Caco-2 (cell line): ENCODE measurements at regions of chr10 and their contacts with region 1.

Region 1: GRCh38 chr10:23994479-23995046 is 214.4 kb upstream of the KIAA1217 start:
- DNase-seq: peak; percentile 73 to 85
- H3K4me3 ChIP-seq: no peak overlapping the region
- H3K4me3 Mint-ChIP-seq: no peak overlapping the region
- H3K27ac Mint-ChIP-seq: no peak overlapping the region
- H3K4me1 ChIP-seq: no peaks in the 10 kb centered on the region
- H3K4me1 Mint-ChIP-seq: peaks cover 6% of the 10 kb centered on the region
- H3K27me3 ChIP-seq: no peaks in the 10 kb centered on the region
- H3K27me3 Mint-ChIP-seq: no peaks in the 10 kb centered on the region
- CTCF ChIP-seq: peak; percentile 97 to 98

Region 2: DNA sequence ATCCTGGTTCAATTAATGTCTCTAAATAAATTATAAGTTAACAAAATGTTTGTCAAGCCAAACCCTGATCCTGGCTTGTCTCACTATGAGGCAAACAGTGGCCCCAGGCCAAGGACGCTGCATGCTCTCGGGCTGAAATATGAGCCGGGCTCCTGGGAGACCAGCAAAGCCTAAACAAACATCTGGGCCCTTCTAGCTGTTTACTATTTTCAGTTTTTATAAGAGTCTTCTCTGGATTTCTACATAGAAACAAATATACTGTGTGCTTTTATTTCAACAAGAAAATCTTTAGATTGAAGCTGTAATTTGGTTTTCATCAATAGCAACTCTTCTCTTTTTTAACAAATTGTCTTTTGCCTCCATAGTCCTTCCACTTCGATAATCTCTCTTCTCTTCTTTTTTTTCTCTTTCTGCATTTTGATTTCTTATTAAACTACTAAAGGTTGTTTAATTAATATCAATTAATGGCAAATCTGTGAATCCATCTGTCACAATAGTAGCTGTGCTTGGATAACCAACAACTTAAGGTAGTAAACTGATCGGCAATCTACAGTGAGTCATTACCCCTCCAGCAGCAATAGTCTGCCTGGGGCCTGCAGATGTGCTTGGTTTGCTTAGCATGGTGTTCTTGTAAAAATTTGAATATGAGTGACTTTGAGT is 1907.7 kb before region 1 on chr10:
- CTCF ChIA-PET with region 1: no interaction called
- POLR2A ChIA-PET with region 1: interaction called, 10 read pairs
- intact Hi-C with region 1: no loop called
- DNase-seq: peak in 1 of 2 experiments; percentile 18
- H3K4me3 ChIP-seq: no peak overlapping the region
- H3K4me3 Mint-ChIP-seq: no peak overlapping the region
- H3K27ac Mint-ChIP-seq: peak overlapping the region; percentile 36
- H3K4me1 ChIP-seq: no peaks in the 10 kb centered on the region
- H3K4me1 Mint-ChIP-seq: peaks cover 5% of the 10 kb centered on the region
- H3K27me3 ChIP-seq: no peaks in the 10 kb centered on the region
- H3K27me3 Mint-ChIP-seq: peaks cover 15% of the 10 kb centered on the region
- CTCF ChIP-seq: no peak

Region 3: DNA sequence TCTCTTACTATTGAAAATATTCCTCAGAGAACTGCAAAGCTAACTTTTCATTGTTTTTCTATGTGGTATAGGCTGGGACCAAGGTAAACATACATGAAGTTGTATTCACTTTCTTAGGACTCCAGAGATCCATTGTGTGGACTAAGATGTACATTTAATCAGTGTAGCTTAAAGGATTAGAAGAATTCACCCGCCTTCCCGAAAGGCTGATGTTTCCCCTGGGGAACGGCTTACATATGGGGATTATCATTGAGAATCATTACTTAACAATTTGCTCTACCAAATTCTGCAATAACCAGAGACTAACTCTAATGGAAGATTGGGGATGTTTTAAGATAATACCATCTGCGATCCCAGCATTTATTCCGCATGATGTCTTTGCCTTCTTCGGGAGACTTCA is 42.7 kb before region 1 on chr10:
- CTCF ChIA-PET with region 1: no interaction called
- POLR2A ChIA-PET with region 1: no interaction called
- intact Hi-C with region 1: no loop called
- DNase-seq: no peak
- H3K4me3 ChIP-seq: no peak overlapping the region
- H3K4me3 Mint-ChIP-seq: no peak overlapping the region
- H3K27ac Mint-ChIP-seq: no peak overlapping the region
- H3K4me1 ChIP-seq: no peaks in the 10 kb centered on the region
- H3K4me1 Mint-ChIP-seq: peaks cover 7% of the 10 kb centered on the region
- H3K27me3 ChIP-seq: no peaks in the 10 kb centered on the region
- H3K27me3 Mint-ChIP-seq: peaks cover 5% of the 10 kb centered on the region
- CTCF ChIP-seq: no peak

Region 4: DNA sequence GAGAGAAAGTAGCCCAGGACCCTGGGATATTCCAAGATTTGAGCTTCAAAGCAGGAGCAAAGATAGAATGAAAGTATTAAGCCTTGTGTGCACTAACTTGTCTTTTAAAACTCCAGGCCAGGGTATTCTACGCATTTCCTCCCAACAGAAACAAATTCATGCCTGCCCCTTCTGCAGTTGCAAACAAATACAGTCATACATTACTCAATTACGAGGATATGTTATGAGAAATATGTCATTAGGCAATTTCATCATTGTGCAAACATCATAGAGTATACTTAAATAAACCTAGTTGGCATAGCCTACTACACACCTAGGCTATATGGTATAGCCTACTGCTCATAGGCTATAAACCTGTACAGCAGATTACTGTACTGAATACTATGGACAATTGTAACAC is 59.9 kb after region 1 on chr10:
- CTCF ChIA-PET with region 1: no interaction called
- POLR2A ChIA-PET with region 1: no interaction called
- intact Hi-C with region 1: no loop called
- DNase-seq: no peak
- H3K4me3 ChIP-seq: no peak overlapping the region
- H3K4me3 Mint-ChIP-seq: no peak overlapping the region
- H3K27ac Mint-ChIP-seq: no peak overlapping the region
- H3K4me1 ChIP-seq: no peaks in the 10 kb centered on the region
- H3K4me1 Mint-ChIP-seq: no peaks in the 10 kb centered on the region
- H3K27me3 ChIP-seq: no peaks in the 10 kb centered on the region
- H3K27me3 Mint-ChIP-seq: peaks cover 14% of the 10 kb centered on the region
- CTCF ChIP-seq: no peak

Region 5: DNA sequence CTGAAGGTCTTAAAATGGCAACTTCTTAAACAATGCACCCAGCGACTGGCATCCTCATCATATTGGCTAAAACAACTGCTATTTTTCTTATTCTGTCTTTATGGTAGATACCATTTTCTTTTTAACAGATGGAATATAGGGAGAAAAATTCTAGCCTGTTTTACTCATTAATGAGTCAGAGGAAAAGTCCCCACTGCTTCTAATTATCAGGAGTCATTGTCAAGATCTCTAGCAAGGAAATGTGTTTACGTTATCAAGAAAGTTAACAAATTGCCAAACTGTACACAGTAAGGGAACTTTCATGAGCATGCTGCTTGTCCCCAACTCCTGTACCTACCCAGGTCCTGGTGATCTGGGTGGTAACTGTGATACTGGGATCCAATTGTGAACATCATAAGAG is 96.7 kb after region 1 on chr10:
- CTCF ChIA-PET with region 1: no interaction called
- POLR2A ChIA-PET with region 1: no interaction called
- intact Hi-C with region 1: no loop called
- DNase-seq: no peak
- H3K4me3 ChIP-seq: no peak overlapping the region
- H3K4me3 Mint-ChIP-seq: no peak overlapping the region
- H3K27ac Mint-ChIP-seq: no peak overlapping the region
- H3K4me1 ChIP-seq: no peaks in the 10 kb centered on the region
- H3K4me1 Mint-ChIP-seq: no peaks in the 10 kb centered on the region
- H3K27me3 ChIP-seq: no peaks in the 10 kb centered on the region
- H3K27me3 Mint-ChIP-seq: peaks cover 6% of the 10 kb centered on the region
- CTCF ChIP-seq: no peak

Region 6: DNA sequence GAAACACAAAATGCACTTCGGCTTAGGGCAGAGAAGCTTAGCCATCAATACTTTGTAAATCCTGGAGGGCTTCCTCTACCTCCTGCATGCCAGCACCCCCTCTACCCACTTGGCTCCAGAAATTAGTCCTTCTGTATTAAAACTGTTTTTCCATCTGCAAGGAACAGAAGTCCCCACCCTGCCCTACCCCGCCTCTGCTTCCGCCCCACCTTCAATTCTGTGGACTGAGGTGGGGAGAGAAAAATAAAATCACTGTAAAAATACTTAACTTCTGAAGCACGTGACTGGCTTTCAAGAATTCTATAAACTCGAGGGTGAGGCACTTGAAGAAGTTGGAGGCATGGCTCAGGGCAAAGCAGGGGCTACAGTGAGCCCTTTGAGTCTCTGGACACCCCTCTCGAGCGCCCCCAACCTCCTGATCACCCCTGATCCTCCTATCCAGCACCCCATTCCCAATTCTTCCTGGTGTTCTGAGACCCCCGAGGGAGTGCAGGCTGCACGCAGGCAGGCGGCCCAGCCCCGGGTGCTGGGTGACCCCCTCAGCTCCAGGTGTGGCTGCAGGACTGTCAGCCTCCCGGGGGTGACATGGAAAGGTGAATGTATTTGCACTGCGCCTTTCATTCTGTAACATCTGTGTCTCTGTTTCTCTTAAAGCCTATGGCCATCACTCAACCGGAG is 207.1 kb after region 1 on chr10:
- CTCF ChIA-PET with region 1: interaction called, 6 read pairs
- POLR2A ChIA-PET with region 1: no interaction called
- intact Hi-C with region 1: loop called (anchors 1 kb)
- DNase-seq: no peak
- H3K4me3 ChIP-seq: no peak overlapping the region
- H3K4me3 Mint-ChIP-seq: no peak overlapping the region
- H3K27ac Mint-ChIP-seq: peak overlapping the region; percentile 28
- H3K4me1 ChIP-seq: peaks cover 21% of the 10 kb centered on the region
- H3K4me1 Mint-ChIP-seq: peaks cover 28% of the 10 kb centered on the region
- H3K27me3 ChIP-seq: no peaks in the 10 kb centered on the region
- H3K27me3 Mint-ChIP-seq: no peaks in the 10 kb centered on the region
- CTCF ChIP-seq: no peak

Region 7: DNA sequence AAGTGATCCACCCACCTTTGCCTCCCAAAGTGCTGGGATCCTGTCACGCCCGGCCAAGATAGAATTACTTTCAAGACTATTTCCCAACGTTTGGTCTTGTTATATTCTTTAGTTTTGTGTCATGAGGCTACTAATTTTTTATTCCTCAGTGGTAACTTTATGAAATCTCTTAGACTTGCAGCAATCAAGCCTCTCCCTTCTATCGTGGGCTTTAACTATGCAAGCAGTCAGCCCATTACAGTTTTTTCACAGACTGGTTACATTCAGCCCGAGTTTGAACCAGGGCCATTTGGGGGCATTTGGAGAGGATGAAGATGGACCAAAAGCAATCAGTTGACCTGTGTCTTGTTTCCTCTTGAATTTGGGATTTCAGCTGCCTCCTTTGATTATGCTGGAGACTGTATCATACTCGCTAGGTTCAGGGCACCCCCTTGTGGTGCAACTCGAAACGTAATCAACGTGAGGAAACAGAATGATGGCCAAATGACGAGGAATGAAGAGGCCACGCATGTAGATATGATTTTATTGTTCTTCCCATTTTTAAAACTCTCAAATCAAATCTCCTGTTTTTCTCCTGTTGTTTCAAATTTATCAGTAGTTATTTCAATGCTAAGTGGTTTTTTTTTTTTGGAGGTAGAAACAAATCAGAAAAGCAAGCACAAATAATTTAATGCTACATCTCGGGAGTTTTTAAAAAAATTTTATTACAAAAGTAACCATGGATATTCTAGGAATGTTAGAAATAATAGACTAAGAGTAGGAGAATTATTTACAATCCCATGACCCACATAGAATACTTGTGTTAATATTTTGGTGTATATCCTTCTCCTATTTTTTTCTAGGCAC is 365.9 kb after region 1 on chr10:
- CTCF ChIA-PET with region 1: no interaction called
- POLR2A ChIA-PET with region 1: no interaction called
- intact Hi-C with region 1: loop called (anchors 1 kb)
- DNase-seq: peak; percentile 75 to 84
- H3K4me3 ChIP-seq: no peak overlapping the region
- H3K4me3 Mint-ChIP-seq: no peak overlapping the region
- H3K27ac Mint-ChIP-seq: peak overlapping the region; percentile 36
- H3K4me1 ChIP-seq: no peaks in the 10 kb centered on the region
- H3K4me1 Mint-ChIP-seq: peaks cover 7% of the 10 kb centered on the region
- H3K27me3 ChIP-seq: no peaks in the 10 kb centered on the region
- H3K27me3 Mint-ChIP-seq: no peaks in the 10 kb centered on the region
- CTCF ChIP-seq: peak; percentile 91 to 92

Region 8: DNA sequence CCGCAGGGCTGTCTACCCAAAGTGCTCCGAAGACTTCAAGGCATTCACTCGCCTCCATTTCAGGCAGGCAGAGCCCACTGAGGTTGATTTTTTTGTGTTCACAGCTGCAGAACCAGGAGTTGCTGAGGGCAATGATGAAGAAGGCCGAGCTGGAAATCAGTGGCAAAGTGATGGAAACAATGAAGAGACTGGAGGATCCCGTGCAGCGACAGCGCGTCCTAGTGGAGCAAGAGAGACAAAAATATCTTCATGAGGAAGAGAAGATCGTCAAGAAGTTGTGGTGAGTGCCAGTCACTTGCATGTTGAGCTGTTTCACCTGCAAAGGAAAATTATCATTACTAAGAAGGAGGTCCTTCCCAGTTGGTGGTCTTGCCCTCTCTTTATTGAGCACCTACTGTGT is 518.6 kb after region 1 on chr10:
- CTCF ChIA-PET with region 1: interaction called, 3 read pairs
- POLR2A ChIA-PET with region 1: no interaction called
- intact Hi-C with region 1: loop called (anchors 2 kb)
- DNase-seq: peak in 1 of 2 experiments; percentile 47
- H3K4me3 ChIP-seq: no peak overlapping the region
- H3K4me3 Mint-ChIP-seq: peak overlapping the region; percentile 7
- H3K27ac Mint-ChIP-seq: peak overlapping the region; percentile 25
- H3K4me1 ChIP-seq: no peaks in the 10 kb centered on the region
- H3K4me1 Mint-ChIP-seq: peaks cover 8% of the 10 kb centered on the region
- H3K27me3 ChIP-seq: no peaks in the 10 kb centered on the region
- H3K27me3 Mint-ChIP-seq: no peaks in the 10 kb centered on the region
- CTCF ChIP-seq: peak; percentile 41 to 43